Left colon (tissue), 2 donors: ENCODE measurements at regions of chr11 and their contacts with region 1.

Region 1: GRCh38 chr11:100687630-100688395 is 725 bp downstream of the ARHGAP42 start:
- DNase-seq: peak; percentile 51 to 59
- ATAC-seq: peak; percentile 75

Region 2: GRCh38 chr11:100855466-100856067 is 167.8 kb after region 1 on chr11:
- intact Hi-C with region 1: loop called in 1 of 2 experiments (anchors 10 kb)
- DNase-seq: no peak
- ATAC-seq: peak; percentile 50

Region 3: DNA sequence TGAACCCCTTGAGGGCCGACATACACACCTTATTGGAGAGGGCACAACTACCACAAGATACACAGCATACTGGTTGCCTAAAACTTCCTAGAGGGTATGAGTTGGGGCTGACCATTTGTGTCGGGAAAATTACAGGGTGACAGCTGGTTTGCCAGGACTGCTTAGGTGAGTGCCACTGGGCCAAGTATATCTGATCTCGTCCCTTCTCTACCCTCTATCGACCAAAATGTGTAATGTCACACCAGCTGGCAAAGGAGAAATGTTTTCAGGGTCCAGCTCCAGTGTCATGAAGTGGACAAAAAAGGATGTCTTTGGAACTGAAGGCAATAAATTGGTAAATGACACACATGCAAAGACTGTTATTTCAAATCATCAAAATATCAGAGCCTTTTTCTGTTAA is 315.7 kb after region 1 on chr11:
- intact Hi-C with region 1: no loop called
- DNase-seq: no peak
- ATAC-seq: no peak